Activated B cell treated with CpG ODN at 0.5 μM for 24 hours (primary cell): ENCODE measurements at regions of chr4 and their contacts with region 1.

Region 1: GRCh38 chr4:154551872-154552686 is 1.9 kb upstream of the PLRG1 start:
- DNase-seq: peak; percentile 39
- ATAC-seq: peak; percentile 59
- H3K4me3 Mint-ChIP-seq: no peak overlapping the region
- H3K27ac Mint-ChIP-seq: peak overlapping the region; percentile 18
- H3K4me1 Mint-ChIP-seq: peaks cover 26% of the 10 kb centered on the region
- H3K27me3 Mint-ChIP-seq: no peaks in the 10 kb centered on the region
- CTCF ChIP-seq: no peak

Region 2: DNA sequence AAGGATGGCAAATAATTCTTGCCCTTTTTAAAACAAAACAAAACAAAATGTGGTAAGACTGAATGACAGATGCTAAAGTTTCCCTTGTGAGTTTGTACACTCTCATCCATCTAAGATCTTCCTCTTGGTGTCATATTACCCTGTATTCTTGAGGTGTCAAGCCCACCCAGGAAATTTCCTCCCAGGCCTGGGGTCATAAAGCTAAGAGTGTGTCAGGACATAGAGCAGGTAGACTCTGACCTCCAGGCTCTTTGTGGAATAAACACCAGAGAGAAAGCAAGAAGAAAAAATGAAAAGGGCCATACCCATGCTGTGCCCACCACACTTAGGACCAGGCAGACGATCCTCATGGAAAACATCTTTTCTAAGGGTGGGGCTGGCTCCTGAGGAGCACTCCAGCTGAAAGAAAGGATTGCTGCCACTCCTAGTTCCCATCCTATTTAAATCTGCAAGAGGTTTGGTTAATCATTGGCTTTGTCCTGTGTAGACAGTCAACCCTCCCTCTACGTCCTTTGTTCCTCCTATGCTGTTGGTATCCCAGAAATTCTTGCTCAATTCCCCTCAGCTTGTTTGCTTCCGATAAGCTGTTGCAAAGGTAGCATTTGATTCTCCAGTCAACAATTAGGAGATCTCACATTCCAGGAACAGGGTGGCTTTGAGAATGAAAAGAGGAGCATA is 38.4 kb after region 1 on chr4 and contains the start of gene FGA:
- CTCF ChIA-PET with region 1: no interaction called
- POLR2A ChIA-PET with region 1: no interaction called
- intact Hi-C with region 1: no loop called
- DNase-seq: no peak
- ATAC-seq: no peak
- H3K4me3 Mint-ChIP-seq: no peak within 1 kb of the TSS
- H3K27ac Mint-ChIP-seq: no peak within 1 kb of the TSS
- H3K4me1 Mint-ChIP-seq: no peaks in the 10 kb centered on the region
- H3K27me3 Mint-ChIP-seq: peaks cover 5% of the 10 kb centered on the region
- CTCF ChIP-seq: no peak
- total RNA-seq, gene FGA: not detected in 2 replicates

Region 3: DNA sequence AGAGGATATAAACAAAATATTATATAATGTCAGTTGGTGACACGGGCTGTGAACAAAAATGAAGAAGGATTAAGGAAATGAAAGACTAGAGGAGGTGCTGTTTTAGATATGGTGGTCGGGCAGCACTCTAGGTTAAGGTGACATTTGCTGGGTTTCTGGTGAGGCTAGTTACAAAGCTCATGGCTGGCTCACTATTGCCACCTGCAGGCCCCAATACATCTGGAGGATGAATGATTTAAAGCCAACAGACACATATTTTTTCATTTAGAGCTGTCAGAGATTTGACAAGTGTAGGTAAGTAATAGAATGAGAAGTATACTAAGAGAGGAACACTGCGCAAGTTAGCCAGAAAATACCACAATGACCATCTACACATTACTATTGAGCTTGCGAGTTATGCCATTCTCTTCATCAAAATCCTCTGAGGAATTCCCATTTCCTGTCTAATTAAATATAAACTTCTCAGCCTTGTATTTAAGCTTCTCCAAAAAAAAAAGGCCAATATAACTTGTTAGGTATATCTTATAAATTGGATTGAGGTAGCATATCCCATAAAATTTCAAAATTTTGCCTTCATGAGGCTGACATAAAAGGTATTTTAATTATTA is 66.7 kb after region 1 on chr4:
- CTCF ChIA-PET with region 1: interaction called, 124 read pairs
- POLR2A ChIA-PET with region 1: interaction called, 10 read pairs
- intact Hi-C with region 1: loop called (anchors 1 kb)
- DNase-seq: peak; percentile 19
- ATAC-seq: peak; percentile 80
- H3K4me3 Mint-ChIP-seq: no peak overlapping the region
- H3K27ac Mint-ChIP-seq: no peak overlapping the region
- H3K4me1 Mint-ChIP-seq: peaks cover 15% of the 10 kb centered on the region
- H3K27me3 Mint-ChIP-seq: peaks cover 2% of the 10 kb centered on the region
- CTCF ChIP-seq: no peak

Region 4: GRCh38 chr4:155353923-155354540 is 802.0 kb after region 1 on chr4:
- CTCF ChIA-PET with region 1: no interaction called
- POLR2A ChIA-PET with region 1: no interaction called
- intact Hi-C with region 1: loop called (anchors 1 kb)
- DNase-seq: no peak
- ATAC-seq: peak; percentile 28
- H3K4me3 Mint-ChIP-seq: no peak overlapping the region
- H3K27ac Mint-ChIP-seq: no peak overlapping the region
- H3K4me1 Mint-ChIP-seq: no peaks in the 10 kb centered on the region
- H3K27me3 Mint-ChIP-seq: no peaks in the 10 kb centered on the region
- CTCF ChIP-seq: no peak

Region 5: GRCh38 chr4:155376387-155377268 is 824.5 kb after region 1 on chr4 and contains the start of gene MAP9:
- CTCF ChIA-PET with region 1: interaction called, 6 read pairs
- POLR2A ChIA-PET with region 1: interaction called, 4 read pairs
- intact Hi-C with region 1: loop called (anchors 1 kb)
- DNase-seq: peak; percentile 84
- ATAC-seq: peak; percentile 96
- H3K4me3 Mint-ChIP-seq: peak within 1 kb of the TSS; percentile 92
- H3K27ac Mint-ChIP-seq: peak within 1 kb of the TSS; percentile 92
- H3K4me1 Mint-ChIP-seq: peaks cover 15% of the 10 kb centered on the region
- H3K27me3 Mint-ChIP-seq: peaks cover 3% of the 10 kb centered on the region
- CTCF ChIP-seq: no peak
- total RNA-seq, gene MAP9: 8.8 and 10.7 TPM in 2 replicates

Region 6: GRCh38 chr4:155953151-155954114 is 1401.4 kb after region 1 on chr4 and contains the start of gene CTSO:
- CTCF ChIA-PET with region 1: interaction called, 4 read pairs
- POLR2A ChIA-PET with region 1: interaction called, 7 read pairs
- intact Hi-C with region 1: loop called (anchors 1 kb)
- DNase-seq: peak; percentile 66
- ATAC-seq: peak; percentile 91
- H3K4me3 Mint-ChIP-seq: peak within 1 kb of the TSS; percentile 99
- H3K27ac Mint-ChIP-seq: peak within 1 kb of the TSS; percentile 99
- H3K4me1 Mint-ChIP-seq: peaks cover 26% of the 10 kb centered on the region
- H3K27me3 Mint-ChIP-seq: peaks cover 10% of the 10 kb centered on the region
- CTCF ChIP-seq: no peak
- total RNA-seq, gene CTSO: 12.6 and 12.9 TPM in 2 replicates